Pancreas (tissue), 10 donors: ENCODE measurements at regions of chr6 and their contacts with region 1.

Region 1: GRCh38 chr6:7725849-7726415 is at the start of gene BMP6:
- DNase-seq: peak; percentile 83 to 94 (median 87)
- ATAC-seq: peak; percentile 95 to 97 (median 97)
- H3K4me3 ChIP-seq: peak within 1 kb of the TSS; percentile 28 to 68 (median 38)
- H3K27ac ChIP-seq: no peak within 1 kb of the TSS
- H3K4me1 ChIP-seq: peaks cover 12 to 15% (median 13%) of the 10 kb centered on the region in 3 donors
- H3K27me3 ChIP-seq: peaks cover 0 to 15% (median 1%) of the 10 kb centered on the region in 4 donors
- CTCF ChIP-seq: no peak
- total RNA-seq, gene BMP6: 0.09 to 0.69 (median 0.31) TPM

Region 2: GRCh38 chr6:7604506-7604905 is 121.4 kb before region 1 on chr6:
- intact Hi-C with region 1: no loop called
- DNase-seq: no peak
- ATAC-seq: no peak
- H3K4me3 ChIP-seq: no peak overlapping the region
- H3K27ac ChIP-seq: no peak overlapping the region
- H3K4me1 ChIP-seq: no peaks in the 10 kb centered on the region
- H3K27me3 ChIP-seq: no peaks in the 10 kb centered on the region
- CTCF ChIP-seq: no peak

Region 3: DNA sequence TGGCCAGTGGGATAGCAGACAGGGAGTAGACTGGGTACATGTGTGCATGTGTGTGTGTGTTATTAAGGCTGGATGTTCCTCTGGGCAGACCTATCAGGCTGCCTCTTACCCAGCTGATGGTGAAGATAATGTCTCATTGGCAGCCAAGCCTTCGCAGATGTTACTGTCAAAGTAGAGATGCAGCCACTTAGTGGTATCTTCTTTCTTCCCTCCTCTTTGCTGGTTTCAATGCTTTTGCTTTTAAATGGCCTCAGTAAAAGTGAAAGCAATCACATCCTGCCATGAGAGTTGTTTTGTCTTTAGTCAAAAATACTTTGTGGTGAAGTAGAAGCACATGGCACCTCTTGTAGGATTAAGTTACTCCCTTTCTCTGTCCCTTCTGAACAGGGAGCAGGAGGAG is 78.4 kb before region 1 on chr6:
- intact Hi-C with region 1: no loop called
- DNase-seq: no peak
- ATAC-seq: no peak
- H3K4me3 ChIP-seq: no peak overlapping the region
- H3K27ac ChIP-seq: no peak overlapping the region
- H3K4me1 ChIP-seq: no peaks in the 10 kb centered on the region
- H3K27me3 ChIP-seq: no peaks in the 10 kb centered on the region
- CTCF ChIP-seq: no peak

Region 4: GRCh38 chr6:8006208-8006607 is 280.3 kb after region 1 on chr6:
- intact Hi-C with region 1: loop called in 2 of 3 experiments (anchors 10 kb)
- DNase-seq: no peak
- ATAC-seq: peak in 3 of 4 donors; percentile 62 to 66 (median 64)
- H3K4me3 ChIP-seq: no peak overlapping the region
- H3K27ac ChIP-seq: no peak overlapping the region
- H3K4me1 ChIP-seq: no peaks in the 10 kb centered on the region
- H3K27me3 ChIP-seq: no peaks in the 10 kb centered on the region
- CTCF ChIP-seq: peak in 3 of 4 donors; percentile 14 to 22 (median 18)

Region 5: DNA sequence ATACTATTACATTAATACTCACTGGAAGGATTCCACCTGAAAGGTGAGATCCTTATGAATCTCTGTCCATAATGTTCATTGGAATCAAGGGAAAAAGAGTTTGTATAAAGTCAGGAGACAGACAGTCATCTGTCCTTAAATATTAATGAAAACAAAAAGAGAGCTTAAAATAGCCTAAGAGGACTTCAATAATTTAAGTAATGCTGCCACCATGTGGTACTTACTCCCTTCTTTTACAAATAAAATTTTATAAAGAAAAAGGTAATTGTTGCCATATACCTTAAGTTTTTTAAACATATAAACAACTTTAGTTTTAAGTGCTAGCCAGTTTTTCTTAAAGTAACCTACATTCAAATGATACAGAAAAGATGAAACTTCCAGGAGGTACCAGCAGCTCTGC is 333.2 kb after region 1 on chr6:
- intact Hi-C with region 1: loop called in 1 of 3 experiments (anchors 10 kb)
- DNase-seq: no peak
- ATAC-seq: no peak
- H3K4me3 ChIP-seq: no peak overlapping the region
- H3K27ac ChIP-seq: no peak overlapping the region
- H3K4me1 ChIP-seq: no peaks in the 10 kb centered on the region
- H3K27me3 ChIP-seq: no peaks in the 10 kb centered on the region
- CTCF ChIP-seq: no peak